Posterior cingulate gyrus (tissue), 11 donors: ENCODE measurements at regions of chr2 and their contacts with region 1.

Region 1: GRCh38 chr2:74199871-74200305 is 1.5 kb downstream of the MTHFD2 start:
- DNase-seq: no peak

Region 2: DNA sequence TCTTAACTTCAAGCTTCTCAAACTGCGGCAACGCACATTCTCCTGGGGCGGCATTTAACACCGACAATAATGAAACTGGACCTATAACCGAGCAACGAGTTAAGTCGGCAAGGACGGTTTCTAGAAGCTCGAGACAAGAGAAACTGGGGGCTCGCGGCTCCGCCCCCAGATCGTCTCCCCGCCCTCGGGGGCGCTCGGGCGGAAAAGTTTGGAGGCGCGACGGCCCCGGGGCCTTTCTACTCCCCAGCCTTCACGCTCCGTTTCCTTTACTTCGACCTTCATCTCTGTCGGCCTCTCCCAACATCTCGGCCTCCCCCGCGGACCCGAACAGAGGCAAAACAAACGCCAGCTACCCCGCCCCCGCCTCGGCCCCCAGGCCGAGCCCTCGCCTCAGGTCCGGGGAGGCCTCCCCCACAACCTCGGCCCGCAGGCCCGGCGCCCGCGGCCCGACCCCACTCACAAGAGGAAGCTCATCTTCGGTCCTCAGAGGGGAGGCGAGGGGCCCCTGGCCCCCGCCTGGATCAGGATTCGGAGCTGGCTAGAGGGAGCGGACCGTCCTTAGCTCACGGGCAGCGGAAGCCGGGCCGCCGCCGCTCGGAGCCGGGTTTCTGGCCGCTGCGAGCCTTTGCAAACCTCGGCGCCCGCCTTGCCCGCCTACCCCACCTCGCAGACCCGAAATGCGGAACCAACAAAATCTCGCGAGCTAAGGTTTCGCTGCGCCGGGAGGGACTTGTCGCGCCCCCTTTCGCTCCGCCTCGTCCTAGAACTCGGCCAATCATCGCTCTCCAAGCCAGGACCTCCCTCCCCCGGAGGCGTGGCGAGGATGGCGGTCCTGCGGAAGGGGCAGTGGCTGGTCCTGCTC is 21.5 kb before region 1 on chr2 and contains the start of gene MOB1A:
- intact Hi-C with region 1: loop called (anchors 2 kb)
- DNase-seq: peak; percentile 95 to 100 (median 98)